Activated CD8-positive, alpha-beta T cell treated with anti-CD3 and anti-CD28 coated beads for 36 hours (primary cell): ENCODE measurements at regions of chr14 and their contacts with region 1.

Region 1: DNA sequence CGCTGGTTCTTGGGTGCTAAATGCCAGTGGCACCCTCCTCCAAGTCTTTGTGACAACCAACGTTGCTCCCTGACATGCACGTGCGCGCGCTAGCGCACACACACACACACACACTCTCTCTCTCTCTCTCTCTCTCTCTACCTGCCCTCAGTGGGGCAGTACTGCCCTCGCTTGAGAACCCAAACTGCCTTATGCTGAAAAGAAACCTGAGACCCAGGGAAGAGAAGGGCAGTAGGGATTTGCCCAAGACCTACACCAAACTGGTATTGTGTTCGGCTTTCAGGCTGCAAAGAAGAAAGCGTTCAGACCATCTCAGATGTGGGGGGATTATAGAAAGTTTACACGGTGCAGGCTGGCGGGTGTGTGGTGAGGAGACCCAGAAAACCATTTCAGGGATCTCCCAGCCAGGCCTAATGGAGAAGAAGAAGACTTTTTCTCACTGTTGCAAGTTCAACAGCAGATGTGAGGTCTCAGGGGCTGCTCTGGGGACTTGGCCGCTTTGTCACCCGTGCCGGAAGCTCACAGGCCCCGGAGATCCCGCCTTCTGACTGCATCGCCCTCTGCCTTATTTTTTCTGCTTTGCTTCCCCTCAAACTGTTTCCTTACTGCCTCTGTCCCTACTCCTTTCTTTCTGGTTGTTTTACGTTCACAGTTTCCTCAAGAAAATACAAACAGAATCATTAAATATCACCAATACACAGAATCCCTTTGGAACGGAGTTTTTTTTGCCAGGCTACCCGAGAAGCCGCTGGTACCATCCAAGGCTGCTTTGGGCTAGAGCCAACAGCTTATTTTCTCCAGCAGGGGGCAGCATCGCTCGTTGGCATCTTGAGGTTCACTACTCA is 82.4 kb downstream of the PPM1A start:
- DNase-seq: peak; percentile 92
- ATAC-seq: peak; percentile 83
- H3K4me3 Mint-ChIP-seq: peak overlapping the region; percentile 86
- H3K27ac Mint-ChIP-seq: peak overlapping the region; percentile 97
- H3K4me1 Mint-ChIP-seq: peaks cover 28% of the 10 kb centered on the region
- H3K27me3 Mint-ChIP-seq: peaks cover 23% of the 10 kb centered on the region
- CTCF ChIP-seq: peak; percentile 93

Region 2: GRCh38 chr14:60248697-60249318 is 82.6 kb before region 1 on chr14 and contains the start of gene PPM1A:
- CTCF ChIA-PET with region 1: interaction called, 16 read pairs
- POLR2A ChIA-PET with region 1: interaction called, 21 read pairs
- intact Hi-C with region 1: loop called (anchors 5 kb)
- DNase-seq: peak; percentile 96
- ATAC-seq: peak; percentile 76
- H3K4me3 Mint-ChIP-seq: peak within 1 kb of the TSS; percentile 90
- H3K27ac Mint-ChIP-seq: peak within 1 kb of the TSS; percentile 100
- H3K4me1 Mint-ChIP-seq: peaks cover 52% of the 10 kb centered on the region
- H3K27me3 Mint-ChIP-seq: no peaks in the 10 kb centered on the region
- CTCF ChIP-seq: no peak
- total RNA-seq, gene PPM1A: 40.0 to 40.5 TPM

Region 3: GRCh38 chr14:60266021-60266937 is 65.1 kb before region 1 on chr14:
- CTCF ChIA-PET with region 1: interaction called, 6 read pairs
- POLR2A ChIA-PET with region 1: interaction called, 3 read pairs
- intact Hi-C with region 1: loop called (anchors 5 kb)
- DNase-seq: peak; percentile 44
- ATAC-seq: peak; percentile 65
- H3K4me3 Mint-ChIP-seq: no peak overlapping the region
- H3K27ac Mint-ChIP-seq: no peak overlapping the region
- H3K4me1 Mint-ChIP-seq: peaks cover 14% of the 10 kb centered on the region
- H3K27me3 Mint-ChIP-seq: no peaks in the 10 kb centered on the region
- CTCF ChIP-seq: peak; percentile 71

Region 4: GRCh38 chr14:60311417-60311816 is 20.0 kb before region 1 on chr14:
- CTCF ChIA-PET with region 1: interaction called, 10 read pairs
- POLR2A ChIA-PET with region 1: no interaction called
- intact Hi-C with region 1: no loop called
- DNase-seq: no peak
- ATAC-seq: no peak
- H3K4me3 Mint-ChIP-seq: no peak overlapping the region
- H3K27ac Mint-ChIP-seq: no peak overlapping the region
- H3K4me1 Mint-ChIP-seq: no peaks in the 10 kb centered on the region
- H3K27me3 Mint-ChIP-seq: peaks cover 9% of the 10 kb centered on the region
- CTCF ChIP-seq: no peak

Region 5: GRCh38 chr14:60349663-60350365 is 18.4 kb after region 1 on chr14:
- CTCF ChIA-PET with region 1: interaction called, 34 read pairs
- POLR2A ChIA-PET with region 1: no interaction called
- intact Hi-C with region 1: no loop called
- DNase-seq: peak; percentile 42
- ATAC-seq: no peak
- H3K4me3 Mint-ChIP-seq: no peak overlapping the region
- H3K27ac Mint-ChIP-seq: no peak overlapping the region
- H3K4me1 Mint-ChIP-seq: no peaks in the 10 kb centered on the region
- H3K27me3 Mint-ChIP-seq: peaks cover 2% of the 10 kb centered on the region
- CTCF ChIP-seq: peak; percentile 72

Region 6: DNA sequence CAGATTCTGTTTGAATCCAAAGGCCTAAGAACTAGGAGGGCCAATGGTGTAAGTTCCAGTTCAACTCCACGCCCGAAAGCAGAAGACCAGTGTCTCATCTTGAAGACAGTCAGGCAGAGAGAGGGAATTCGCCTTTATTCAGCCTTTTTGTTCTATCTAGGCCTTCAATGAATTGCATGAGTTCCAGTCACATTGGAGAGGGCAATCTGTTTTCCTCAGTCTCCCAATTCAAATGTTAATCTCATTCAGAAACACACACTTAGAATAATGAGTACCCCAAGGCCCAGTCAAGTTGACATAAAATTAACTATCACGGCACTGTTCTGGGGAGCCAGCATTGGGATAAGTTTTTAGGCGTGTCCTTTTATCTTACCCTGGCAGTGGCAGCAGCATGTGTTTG is 88.6 kb after region 1 on chr14:
- CTCF ChIA-PET with region 1: no interaction called
- POLR2A ChIA-PET with region 1: no interaction called
- intact Hi-C with region 1: no loop called
- DNase-seq: no peak
- ATAC-seq: no peak
- H3K4me3 Mint-ChIP-seq: no peak overlapping the region
- H3K27ac Mint-ChIP-seq: no peak overlapping the region
- H3K4me1 Mint-ChIP-seq: no peaks in the 10 kb centered on the region
- H3K27me3 Mint-ChIP-seq: no peaks in the 10 kb centered on the region
- CTCF ChIP-seq: no peak

Region 7: DNA sequence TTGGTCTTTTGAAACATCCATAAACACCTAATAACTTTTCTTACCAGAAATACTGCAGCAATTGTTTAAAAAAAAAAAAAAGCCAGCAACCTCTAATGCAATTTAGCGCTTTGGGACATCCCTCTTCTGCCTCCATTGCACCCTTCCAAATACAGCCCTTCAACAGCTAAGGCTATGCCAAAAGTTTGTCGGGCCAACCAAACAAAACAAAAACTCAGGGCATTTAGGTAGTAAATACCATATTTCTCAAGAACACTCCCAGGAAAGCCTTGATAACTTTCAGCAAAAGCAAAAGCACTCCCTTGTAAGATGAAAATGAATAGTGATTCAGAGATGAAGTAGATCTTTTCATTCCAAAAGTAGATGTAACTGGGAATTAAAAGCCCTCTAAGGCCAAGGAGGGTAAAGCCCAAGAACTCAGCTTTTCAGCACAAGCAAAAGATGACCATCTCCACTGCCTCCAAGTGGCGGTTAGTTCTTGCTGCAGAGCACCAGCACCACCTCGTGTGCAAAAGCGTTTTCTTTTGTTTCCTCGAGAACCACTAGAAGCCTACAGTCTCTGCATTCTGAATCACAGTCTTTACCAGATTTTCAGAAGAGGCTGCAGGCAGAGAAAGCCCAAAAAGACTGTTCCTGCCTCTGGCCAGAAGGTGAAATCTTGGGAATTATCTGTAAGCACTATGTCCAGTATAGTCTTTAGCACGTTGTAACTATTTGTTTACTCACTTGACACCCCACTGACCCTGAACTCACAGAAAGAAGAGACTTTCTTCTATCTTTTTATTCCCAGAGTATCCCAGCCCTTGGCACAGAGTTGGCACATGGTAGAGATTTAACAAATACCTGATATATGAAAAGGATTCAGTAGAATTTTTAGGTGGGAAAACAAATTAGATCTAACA is 230.7 kb after region 1 on chr14:
- CTCF ChIA-PET with region 1: interaction called, 17 read pairs
- POLR2A ChIA-PET with region 1: no interaction called
- intact Hi-C with region 1: no loop called
- DNase-seq: peak; percentile 54
- ATAC-seq: no peak
- H3K4me3 Mint-ChIP-seq: no peak overlapping the region
- H3K27ac Mint-ChIP-seq: no peak overlapping the region
- H3K4me1 Mint-ChIP-seq: no peaks in the 10 kb centered on the region
- H3K27me3 Mint-ChIP-seq: peaks cover 3% of the 10 kb centered on the region
- CTCF ChIP-seq: peak; percentile 60